SK-N-SH (cell line): ENCODE measurements at regions of chr10 and their contacts with region 1.

Region 1: DNA sequence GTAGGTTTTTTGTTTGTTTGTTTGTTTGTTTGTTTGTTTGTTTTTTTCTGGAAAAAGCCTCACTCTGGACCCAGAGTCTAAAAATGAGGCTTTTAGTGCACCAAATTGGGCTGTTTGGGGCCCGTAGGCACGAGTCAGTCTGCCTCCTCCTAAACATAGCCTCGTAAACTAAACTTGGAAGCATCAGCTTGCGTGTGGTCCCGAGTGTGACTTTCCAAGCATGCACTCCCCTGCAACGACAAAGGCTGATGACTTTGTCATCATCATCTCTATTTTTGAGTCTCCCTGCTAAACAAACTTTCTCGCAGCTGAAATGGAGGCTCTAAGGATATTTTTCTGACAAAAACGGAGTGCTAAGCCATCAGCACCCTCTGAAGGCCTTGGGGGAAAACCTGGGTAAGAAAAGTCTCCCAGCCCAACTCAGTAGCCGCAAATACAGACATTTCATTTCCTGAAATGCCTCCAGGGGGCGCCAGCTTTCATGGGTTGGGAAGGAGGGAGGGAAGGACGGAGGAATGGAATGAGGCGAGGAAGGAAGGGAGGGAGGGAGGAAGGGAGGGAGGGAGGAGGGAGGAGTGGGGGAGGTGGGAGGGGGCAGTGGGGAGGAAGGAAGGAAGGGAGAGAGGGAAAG is 245.9 kb downstream of the KCNMA1 start:
- DNase-seq: peak; percentile 66
- H3K4me3 ChIP-seq: no peak overlapping the region
- H3K27ac ChIP-seq: peak overlapping the region; percentile 78 to 95
- H3K4me1 ChIP-seq: peaks cover 49 to 57% of the 10 kb centered on the region in 2 experiments
- H3K27me3 ChIP-seq: no peaks in the 10 kb centered on the region
- CTCF ChIP-seq: peak; percentile 75
- EP300 ChIP-seq: no peak; a peak in 1 of 4 replicates
- RAD21 ChIP-seq: peak; percentile 78

Region 2: DNA sequence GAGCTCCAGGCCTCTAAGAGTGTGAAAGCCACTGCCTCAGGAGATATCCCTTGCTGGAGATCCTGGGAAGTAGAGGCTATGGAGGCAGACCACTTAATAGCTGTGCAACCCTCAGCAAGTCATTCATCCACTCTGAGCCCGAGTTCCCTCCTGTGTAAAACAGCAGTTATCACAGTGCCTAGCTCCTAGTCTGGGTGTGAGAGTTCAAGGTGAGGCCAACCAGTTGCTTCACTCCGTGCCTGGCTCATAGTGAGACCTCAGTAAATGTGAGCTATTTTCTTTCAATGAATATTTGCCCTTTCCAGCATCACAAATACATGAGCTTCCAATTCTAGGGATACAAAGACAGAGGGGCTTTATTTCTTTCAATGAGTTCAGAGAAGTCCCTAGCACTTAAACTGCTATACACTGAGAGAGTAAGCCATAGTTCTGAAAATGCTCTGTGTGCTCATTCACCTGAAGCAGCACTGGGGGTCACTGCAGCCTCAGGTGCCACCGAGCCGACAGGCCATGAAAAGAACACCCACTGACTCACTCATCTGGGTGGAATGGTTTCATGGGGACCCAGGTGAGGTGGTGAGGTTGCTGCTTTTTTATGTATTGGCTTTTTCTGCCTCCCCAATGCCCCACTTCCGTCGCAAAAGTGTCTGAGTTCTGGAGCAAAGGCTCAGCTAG is 13.9 kb before region 1 on chr10:
- CTCF ChIA-PET with region 1: interaction called, 11 read pairs
- POLR2A ChIA-PET with region 1: no interaction called
- DNase-seq: no peak
- H3K4me3 ChIP-seq: no peak overlapping the region
- H3K27ac ChIP-seq: no peak overlapping the region
- H3K4me1 ChIP-seq: no peaks in the 10 kb centered on the region
- H3K27me3 ChIP-seq: no peaks in the 10 kb centered on the region
- CTCF ChIP-seq: no peak
- EP300 ChIP-seq: no peak
- RAD21 ChIP-seq: peak; percentile 44